Activated CD8-positive, alpha-beta T cell treated with anti-CD3 and anti-CD28 coated beads for 36 hours (primary cell): ENCODE measurements at regions of chrX and their contacts with region 1.

Region 1: DNA sequence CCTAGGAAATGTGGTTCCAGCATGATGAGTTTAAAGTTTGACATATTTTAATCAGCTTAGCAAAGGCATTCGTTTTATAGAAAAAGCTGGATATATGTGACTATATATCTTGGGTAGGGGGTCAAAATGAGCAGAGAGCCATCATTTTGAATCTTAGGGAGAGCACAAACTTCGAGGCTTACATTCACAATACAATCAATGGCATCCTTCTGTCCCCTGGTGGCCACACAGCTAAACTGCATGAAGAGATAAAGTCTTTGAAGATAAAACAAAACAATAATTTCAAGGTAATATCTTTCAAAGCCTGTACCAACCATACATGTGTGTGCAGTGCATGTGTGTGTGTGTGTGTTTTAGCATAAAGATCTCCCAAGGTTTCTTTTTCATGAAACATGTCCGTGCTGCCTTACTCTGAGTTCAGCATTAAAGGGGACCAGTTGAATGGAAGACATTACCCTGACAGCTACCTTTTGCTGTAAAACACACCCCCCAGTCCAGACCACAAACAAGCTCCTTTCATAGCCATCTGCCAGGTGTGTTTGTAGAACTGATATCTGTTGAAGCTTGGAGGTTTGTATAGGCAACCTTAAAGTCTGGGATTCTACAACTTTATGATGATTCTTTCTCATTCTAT is 22.0 kb downstream of the DYNLT3 start:
- DNase-seq: peak; percentile 73
- ATAC-seq: peak; percentile 85
- H3K4me3 Mint-ChIP-seq: no peak overlapping the region
- H3K27ac Mint-ChIP-seq: no peak overlapping the region
- H3K4me1 Mint-ChIP-seq: peaks cover 20% of the 10 kb centered on the region
- H3K27me3 Mint-ChIP-seq: no peaks in the 10 kb centered on the region
- CTCF ChIP-seq: peak; percentile 61

Region 2: DNA sequence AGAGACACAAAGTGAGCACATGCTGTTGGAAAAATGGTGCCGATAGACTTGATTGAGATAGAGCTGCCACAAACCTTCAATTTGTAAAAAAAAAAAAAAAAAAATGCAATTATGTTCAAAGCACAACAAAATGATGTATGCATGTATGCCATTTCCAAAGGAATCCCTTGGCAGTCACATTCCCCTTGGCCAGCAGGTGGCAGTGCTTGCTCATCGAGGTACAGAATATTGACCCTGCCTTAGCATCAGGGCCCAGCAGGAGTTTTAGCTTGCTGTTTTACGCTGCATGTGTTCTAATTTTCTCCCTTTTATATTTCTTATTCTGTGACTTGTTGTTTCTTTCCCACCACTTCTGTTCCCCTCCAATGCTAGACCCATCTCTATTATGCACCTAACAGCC is 80.0 kb before region 1 on chrX:
- CTCF ChIA-PET with region 1: interaction called, 165 read pairs
- POLR2A ChIA-PET with region 1: interaction called, 7 read pairs
- intact Hi-C with region 1: loop called (anchors 1 kb)
- DNase-seq: peak; percentile 82
- ATAC-seq: peak; percentile 41
- H3K4me3 Mint-ChIP-seq: no peak overlapping the region
- H3K27ac Mint-ChIP-seq: peak overlapping the region; percentile 85
- H3K4me1 Mint-ChIP-seq: peaks cover 16% of the 10 kb centered on the region
- H3K27me3 Mint-ChIP-seq: no peaks in the 10 kb centered on the region
- CTCF ChIP-seq: peak; percentile 67

Region 3: DNA sequence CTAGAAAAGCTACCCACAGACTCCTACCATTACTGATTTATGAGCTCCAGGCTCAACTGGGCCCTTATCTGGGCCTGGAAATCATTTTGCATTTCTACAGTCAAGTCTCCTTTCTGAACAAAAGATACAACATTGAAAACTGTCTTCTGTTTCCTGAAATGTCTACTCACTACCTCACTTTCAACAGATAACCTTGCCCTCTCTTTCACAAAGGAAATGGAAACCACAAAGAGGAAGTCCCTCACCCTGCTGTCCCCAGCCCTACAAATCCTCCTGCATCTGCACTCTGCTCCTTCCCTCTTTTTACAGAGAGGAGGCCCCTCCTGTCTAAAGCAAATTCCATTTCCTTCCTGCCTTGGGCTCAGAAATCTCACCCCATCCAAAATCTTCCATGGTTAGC is 70.3 kb before region 1 on chrX:
- CTCF ChIA-PET with region 1: interaction called, 10 read pairs
- POLR2A ChIA-PET with region 1: no interaction called
- intact Hi-C with region 1: no loop called
- DNase-seq: peak; percentile 30
- ATAC-seq: peak; percentile 74
- H3K4me3 Mint-ChIP-seq: no peak overlapping the region
- H3K27ac Mint-ChIP-seq: no peak overlapping the region
- H3K4me1 Mint-ChIP-seq: peaks cover 16% of the 10 kb centered on the region
- H3K27me3 Mint-ChIP-seq: no peaks in the 10 kb centered on the region
- CTCF ChIP-seq: no peak

Region 4: DNA sequence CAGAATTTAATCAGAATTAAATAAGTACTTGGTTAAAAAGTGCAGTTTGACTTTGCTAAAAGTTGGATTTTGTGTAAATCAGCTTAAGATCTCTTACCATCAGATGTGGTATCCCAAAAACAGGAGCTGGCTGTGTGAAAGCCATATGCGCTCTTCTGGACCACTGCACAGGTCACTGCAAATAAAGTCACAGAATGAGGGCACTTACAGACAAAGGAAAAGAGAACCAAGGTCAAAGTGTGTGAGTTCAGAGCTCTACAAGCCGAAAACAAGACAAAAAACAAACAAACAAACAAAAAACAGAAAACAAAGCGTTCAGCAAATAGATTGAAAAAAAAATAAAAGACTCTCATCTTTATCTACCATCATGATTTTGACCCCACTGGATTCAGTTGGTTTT is 15.6 kb after region 1 on chrX:
- CTCF ChIA-PET with region 1: interaction called, 16 read pairs
- POLR2A ChIA-PET with region 1: no interaction called
- intact Hi-C with region 1: no loop called
- DNase-seq: no peak
- ATAC-seq: no peak
- H3K4me3 Mint-ChIP-seq: no peak overlapping the region
- H3K27ac Mint-ChIP-seq: peak overlapping the region; percentile 20
- H3K4me1 Mint-ChIP-seq: peaks cover 12% of the 10 kb centered on the region
- H3K27me3 Mint-ChIP-seq: no peaks in the 10 kb centered on the region
- CTCF ChIP-seq: no peak

Region 5: GRCh38 chrX:37854148-37854547 is 28.8 kb after region 1 on chrX:
- CTCF ChIA-PET with region 1: no interaction called
- POLR2A ChIA-PET with region 1: no interaction called
- intact Hi-C with region 1: no loop called
- DNase-seq: no peak
- ATAC-seq: no peak
- H3K4me3 Mint-ChIP-seq: no peak overlapping the region
- H3K27ac Mint-ChIP-seq: no peak overlapping the region
- H3K4me1 Mint-ChIP-seq: peaks cover 15% of the 10 kb centered on the region
- H3K27me3 Mint-ChIP-seq: no peaks in the 10 kb centered on the region
- CTCF ChIP-seq: no peak

Region 6: DNA sequence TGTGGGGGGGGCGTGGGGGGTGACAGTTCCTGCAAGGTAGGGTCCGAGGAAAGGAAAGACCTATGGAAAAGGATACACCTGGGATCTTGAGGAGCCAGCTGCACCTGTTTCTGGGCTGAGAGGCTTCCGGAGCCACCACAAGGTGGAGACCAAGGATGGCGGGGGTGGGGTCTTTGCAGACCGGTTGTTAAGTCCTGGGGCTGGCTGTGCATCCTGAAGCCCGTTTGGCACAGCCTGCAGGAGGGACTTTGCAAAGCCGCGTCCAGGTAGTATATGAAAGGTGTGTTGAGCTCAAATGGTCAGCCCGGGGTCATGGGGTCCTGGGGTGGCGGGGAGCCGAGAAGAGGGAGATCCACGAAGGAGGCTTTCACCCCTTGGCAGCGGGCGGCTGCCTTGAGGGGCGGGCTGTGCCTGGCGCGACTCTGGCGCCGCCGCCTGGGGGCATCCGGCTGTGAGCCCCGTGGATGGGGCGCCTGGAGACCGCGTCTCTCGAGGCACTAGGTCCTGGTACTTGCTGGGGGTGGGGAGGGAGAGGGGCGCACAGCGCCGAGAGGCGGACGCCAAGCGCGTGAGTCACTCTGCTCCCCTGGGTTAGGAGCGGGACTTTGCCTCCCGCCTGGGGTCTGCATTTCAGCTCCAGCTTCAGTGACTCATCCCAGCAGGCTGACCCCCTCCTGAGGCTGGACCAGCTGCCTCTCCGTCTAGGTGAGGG is 80.3 kb after region 1 on chrX:
- CTCF ChIA-PET with region 1: no interaction called
- POLR2A ChIA-PET with region 1: no interaction called
- intact Hi-C with region 1: no loop called
- DNase-seq: peak; percentile 27
- ATAC-seq: peak; percentile 61
- H3K4me3 Mint-ChIP-seq: no peak overlapping the region
- H3K27ac Mint-ChIP-seq: no peak overlapping the region
- H3K4me1 Mint-ChIP-seq: peaks cover 3% of the 10 kb centered on the region
- H3K27me3 Mint-ChIP-seq: peaks cover 14% of the 10 kb centered on the region
- CTCF ChIP-seq: no peak

Region 7: DNA sequence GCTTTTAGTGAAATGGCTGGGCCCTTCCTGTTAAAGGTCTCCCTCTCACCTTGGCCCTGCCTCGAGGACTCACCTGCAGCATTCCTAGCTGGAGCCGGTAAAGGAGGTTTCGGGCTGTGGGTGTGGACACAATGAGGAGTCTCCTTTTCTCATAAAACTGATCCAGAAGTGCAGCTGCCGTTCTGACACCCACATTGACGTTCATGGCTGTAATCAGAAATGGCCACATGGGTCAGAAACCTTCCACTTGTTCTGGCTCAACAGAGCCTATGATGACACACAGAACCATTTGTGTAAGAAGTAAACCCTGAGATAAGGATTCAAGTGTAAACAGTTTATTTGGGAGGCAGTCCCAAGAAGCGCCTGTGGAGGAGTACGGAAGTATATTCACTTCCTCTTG is 331.5 kb after region 1 on chrX:
- CTCF ChIA-PET with region 1: no interaction called
- POLR2A ChIA-PET with region 1: no interaction called
- intact Hi-C with region 1: no loop called
- DNase-seq: no peak
- ATAC-seq: no peak
- H3K4me3 Mint-ChIP-seq: no peak overlapping the region
- H3K27ac Mint-ChIP-seq: no peak overlapping the region
- H3K4me1 Mint-ChIP-seq: no peaks in the 10 kb centered on the region
- H3K27me3 Mint-ChIP-seq: no peaks in the 10 kb centered on the region
- CTCF ChIP-seq: no peak